ENCODE measurements at regions of chr6 and their contacts with region 1.

Region 1: GRCh38 chr6:150079604-150080003 is 10.7 kb upstream of the ULBP3 start:
- DNase-seq: peak in 5 of 14 experiments; percentile 19 to 64 (median 61)
- ATAC-seq: peak; percentile 75
- H3K4me3 ChIP-seq: no peak overlapping the region
- H3K4me3 Mint-ChIP-seq: peak overlapping the region; percentile 74
- H3K27ac ChIP-seq: no peak overlapping the region
- H3K27ac Mint-ChIP-seq: no peak overlapping the region
- H3K4me1 ChIP-seq: peaks cover 13% of the 10 kb centered on the region
- H3K4me1 Mint-ChIP-seq: peaks cover 25% of the 10 kb centered on the region
- H3K27me3 ChIP-seq: peaks cover 0 to 3% of the 10 kb centered on the region in 2 experiments
- H3K27me3 Mint-ChIP-seq: peaks cover 34% of the 10 kb centered on the region
- CTCF ChIP-seq: no peak

Region 2: DNA sequence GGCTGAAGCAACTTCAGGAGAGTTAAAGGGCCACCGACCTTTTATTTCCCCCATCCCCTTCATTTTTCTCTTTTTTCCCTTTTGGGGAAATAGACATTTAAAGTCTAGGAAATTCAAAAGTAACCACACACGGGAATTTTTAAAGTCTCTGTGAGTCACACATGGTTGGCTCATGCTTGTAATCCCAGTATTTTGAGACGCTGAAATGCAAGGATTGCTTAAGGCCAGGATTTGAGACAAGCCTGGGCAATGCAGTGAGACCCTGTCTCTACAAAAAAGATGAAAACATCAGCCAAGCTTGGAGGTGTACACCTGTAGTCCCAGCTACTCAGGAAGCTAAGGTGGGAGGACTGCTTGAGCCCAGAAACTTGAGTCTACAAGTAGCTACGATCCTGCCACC is 465.3 kb before region 1 on chr6:
- CTCF ChIA-PET with region 1: no interaction called
- POLR2A ChIA-PET with region 1: no interaction called
- intact Hi-C with region 1: no loop called
- DNase-seq: no peak
- ATAC-seq: no peak
- H3K4me3 ChIP-seq: no peak overlapping the region
- H3K4me3 Mint-ChIP-seq: no peak overlapping the region
- H3K27ac ChIP-seq: no peak overlapping the region
- H3K27ac Mint-ChIP-seq: no peak overlapping the region
- H3K4me1 ChIP-seq: peaks cover under 1% of the 10 kb centered on the region
- H3K4me1 Mint-ChIP-seq: peaks cover 19% of the 10 kb centered on the region
- H3K27me3 ChIP-seq: no peaks in the 10 kb centered on the region
- H3K27me3 Mint-ChIP-seq: no peaks in the 10 kb centered on the region
- CTCF ChIP-seq: no peak

Region 3: DNA sequence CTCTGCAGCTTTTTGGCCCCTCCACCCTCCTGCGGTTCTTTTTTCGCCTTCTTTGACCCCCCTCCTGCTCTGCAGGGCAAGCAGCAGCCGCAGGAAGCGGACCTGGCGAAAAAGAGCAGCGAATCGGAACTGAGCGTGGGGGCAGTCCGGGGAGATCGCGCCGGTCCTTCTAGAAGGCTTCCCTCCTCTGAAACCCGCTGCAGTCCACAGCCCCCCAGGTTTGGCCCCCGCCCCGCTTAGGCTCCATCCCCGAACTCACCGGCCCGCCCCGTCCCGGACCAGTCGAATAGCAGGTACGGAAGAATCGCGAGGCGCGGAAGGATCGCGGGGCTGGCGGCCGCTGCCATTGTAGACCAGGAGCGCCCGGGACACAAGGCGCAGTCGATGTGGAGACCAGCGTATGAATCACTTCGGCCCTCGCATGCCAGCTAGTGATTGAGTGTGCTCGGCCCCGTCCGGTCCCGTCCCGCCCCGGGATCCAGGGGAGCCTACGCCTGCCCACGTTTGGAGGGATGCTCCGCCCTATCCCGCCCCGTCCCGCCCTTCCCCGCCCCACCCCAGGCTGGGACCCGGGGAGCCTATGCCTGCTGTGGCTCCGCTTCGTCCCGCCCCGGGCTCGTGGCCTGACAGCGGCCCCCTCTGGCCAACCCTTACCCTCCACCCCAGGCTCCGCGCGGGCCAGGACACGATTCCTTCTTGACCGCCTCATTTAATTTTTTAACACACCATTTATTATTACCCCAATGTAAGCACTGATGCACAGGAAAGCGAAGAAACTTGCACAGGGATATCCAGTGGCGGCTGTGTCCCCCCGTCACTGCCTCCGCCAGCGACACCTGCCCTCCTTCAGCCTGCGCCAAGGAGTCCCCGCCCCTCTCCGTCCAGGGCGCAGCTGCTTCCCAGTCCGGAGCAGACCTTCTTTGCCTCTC is 10.6 kb before region 1 on chr6 and contains the start of gene ULBP3:
- CTCF ChIA-PET with region 1: interaction called, 14 read pairs
- POLR2A ChIA-PET with region 1: interaction called, 4 read pairs
- intact Hi-C with region 1: no loop called
- DNase-seq: peak; percentile 29 to 82 (median 53)
- ATAC-seq: peak; percentile 72
- H3K4me3 ChIP-seq: peak within 1 kb of the TSS; percentile 72
- H3K4me3 Mint-ChIP-seq: peak within 1 kb of the TSS; percentile 94
- H3K27ac ChIP-seq: no peak within 1 kb of the TSS
- H3K27ac Mint-ChIP-seq: no peak within 1 kb of the TSS
- H3K4me1 ChIP-seq: peaks cover 30% of the 10 kb centered on the region
- H3K4me1 Mint-ChIP-seq: peaks cover 20% of the 10 kb centered on the region
- H3K27me3 ChIP-seq: no peaks in the 10 kb centered on the region
- H3K27me3 Mint-ChIP-seq: peaks cover 19% of the 10 kb centered on the region
- CTCF ChIP-seq: peak; percentile 17
- total RNA-seq, gene ULBP3: 0.44 TPM in 1 of 2 experiments, not detected in the other

Region 4: DNA sequence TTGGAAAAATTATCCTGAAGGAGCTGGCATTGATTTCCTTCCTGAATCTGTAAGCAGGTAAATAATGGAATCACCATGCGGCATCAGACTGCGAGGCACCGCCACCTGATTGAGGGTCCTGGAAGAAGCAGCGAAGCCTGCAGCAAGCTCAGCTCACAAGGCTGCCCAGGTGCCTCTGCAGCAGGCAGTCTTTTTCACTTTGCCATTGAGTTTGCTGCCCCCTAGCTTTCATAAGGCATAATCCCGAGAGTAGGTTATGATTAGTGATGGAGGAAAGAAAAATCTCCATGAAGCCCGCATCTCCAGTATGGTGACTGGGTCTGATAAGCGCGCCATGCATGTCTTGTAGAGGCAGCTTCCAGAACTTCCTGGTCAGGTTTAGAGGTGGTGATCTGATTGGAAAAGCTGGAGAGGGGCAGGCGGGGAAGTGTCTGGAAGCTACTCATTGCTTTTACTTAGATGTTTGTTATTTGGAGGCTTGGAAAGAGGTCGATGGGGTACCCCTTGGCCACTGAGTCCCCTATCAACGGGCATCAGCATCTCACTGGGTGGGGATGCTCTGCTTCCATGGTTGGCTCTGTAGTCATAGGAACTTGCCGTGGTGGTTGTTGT is 315.9 kb after region 1 on chr6:
- CTCF ChIA-PET with region 1: interaction called, 3 read pairs
- POLR2A ChIA-PET with region 1: no interaction called
- intact Hi-C with region 1: loop called (anchors 1 to 2 kb)
- DNase-seq: peak in 6 of 14 experiments; percentile 3 to 55 (median 32)
- ATAC-seq: no peak
- H3K4me3 ChIP-seq: no peak overlapping the region
- H3K4me3 Mint-ChIP-seq: no peak overlapping the region
- H3K27ac ChIP-seq: no peak overlapping the region
- H3K27ac Mint-ChIP-seq: no peak overlapping the region
- H3K4me1 ChIP-seq: no peaks in the 10 kb centered on the region
- H3K4me1 Mint-ChIP-seq: no peaks in the 10 kb centered on the region
- H3K27me3 ChIP-seq: peaks cover 7 to 10% of the 10 kb centered on the region in 2 experiments
- H3K27me3 Mint-ChIP-seq: peaks cover 17% of the 10 kb centered on the region
- CTCF ChIP-seq: peak; percentile 39